MCF 10A (cell line): ENCODE measurements at regions of chr19 and their contacts with region 1.

Region 1: DNA sequence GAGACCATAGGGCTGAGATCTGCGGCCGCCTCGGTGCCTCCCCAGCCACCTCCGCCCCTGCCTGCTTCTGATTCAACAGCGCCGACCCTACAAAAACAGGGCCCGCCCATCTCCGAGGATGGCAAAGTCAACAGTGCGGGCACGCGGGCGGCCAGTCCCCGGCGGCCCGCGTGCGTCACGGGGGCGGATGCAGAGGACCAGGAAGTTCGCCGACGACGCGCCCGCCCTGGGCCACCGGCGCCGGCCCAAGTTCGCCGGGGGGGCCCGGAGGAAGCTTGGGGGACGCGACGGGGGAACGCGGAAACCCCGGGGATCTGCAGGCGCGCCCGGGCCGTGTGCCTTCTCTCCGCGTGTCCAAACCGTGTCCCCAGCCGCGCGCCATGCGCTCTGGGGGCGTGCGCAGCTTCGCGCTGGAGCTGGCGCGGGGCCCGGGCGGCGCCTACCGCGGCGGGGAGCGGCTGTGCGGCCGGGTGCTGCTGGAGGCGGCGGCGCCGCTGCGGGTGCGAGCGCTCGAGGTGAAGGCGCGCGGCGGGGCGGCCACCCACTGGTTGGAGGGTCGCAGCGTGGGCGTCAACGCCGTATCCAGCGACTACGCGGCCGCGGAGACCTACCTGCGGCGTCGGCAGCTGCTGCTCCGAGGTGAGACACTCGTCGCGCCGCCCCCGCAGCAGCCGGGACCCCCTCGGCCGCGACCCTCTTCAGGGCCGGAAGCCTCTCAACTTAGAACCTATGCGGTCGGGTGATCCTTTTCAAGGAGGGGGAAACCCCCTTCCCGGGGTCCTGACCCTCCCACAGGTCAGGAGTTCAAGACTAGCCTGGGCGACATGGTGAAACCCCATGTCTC is 6.8 kb upstream of the ARRDC2 start:
- DNase-seq: peak; percentile 88
- H3K4me3 Mint-ChIP-seq: peak overlapping the region; percentile 77
- H3K27ac Mint-ChIP-seq: peak overlapping the region; percentile 94
- H3K4me1 Mint-ChIP-seq: peaks cover 6% of the 10 kb centered on the region
- H3K27me3 Mint-ChIP-seq: no peaks in the 10 kb centered on the region
- CTCF ChIP-seq: no peak

Region 2: GRCh38 chr19:17873786-17874757 is 127.1 kb before region 1 on chr19:
- CTCF ChIA-PET with region 1: interaction called, 18 read pairs
- POLR2A ChIA-PET with region 1: no interaction called
- intact Hi-C with region 1: no loop called
- DNase-seq: peak; percentile 48
- H3K4me3 Mint-ChIP-seq: no peak overlapping the region
- H3K27ac Mint-ChIP-seq: no peak overlapping the region
- H3K4me1 Mint-ChIP-seq: no peaks in the 10 kb centered on the region
- H3K27me3 Mint-ChIP-seq: no peaks in the 10 kb centered on the region
- CTCF ChIP-seq: no peak

Region 3: DNA sequence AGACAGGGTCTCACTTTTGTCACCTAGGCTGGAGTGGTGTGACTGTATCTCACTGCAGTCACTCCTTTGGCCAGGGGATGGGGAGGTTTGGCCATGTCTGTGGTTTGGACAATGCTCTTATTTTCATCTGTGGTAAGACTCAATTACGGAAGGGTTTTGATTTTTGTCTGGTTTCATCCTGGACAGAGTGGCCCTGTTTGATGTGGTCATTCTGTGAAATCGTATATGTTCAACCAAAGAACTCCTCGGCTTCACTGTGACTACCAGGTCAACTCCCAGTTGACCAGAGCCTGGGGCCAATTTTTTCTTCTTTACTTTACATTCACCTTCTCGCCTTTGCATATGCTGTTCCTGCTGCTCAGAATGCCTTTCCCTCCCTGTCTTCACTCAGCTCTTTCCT is 75.1 kb before region 1 on chr19:
- CTCF ChIA-PET with region 1: no interaction called
- POLR2A ChIA-PET with region 1: no interaction called
- intact Hi-C with region 1: no loop called
- DNase-seq: no peak
- H3K4me3 Mint-ChIP-seq: no peak overlapping the region
- H3K27ac Mint-ChIP-seq: no peak overlapping the region
- H3K4me1 Mint-ChIP-seq: no peaks in the 10 kb centered on the region
- H3K27me3 Mint-ChIP-seq: no peaks in the 10 kb centered on the region
- CTCF ChIP-seq: no peak

Region 4: GRCh38 chr19:17947815-17948513 is 53.2 kb before region 1 on chr19:
- CTCF ChIA-PET with region 1: interaction called, 224 read pairs
- POLR2A ChIA-PET with region 1: interaction called, 4 read pairs
- intact Hi-C with region 1: no loop called
- DNase-seq: peak; percentile 94
- H3K4me3 Mint-ChIP-seq: peak overlapping the region; percentile 83
- H3K27ac Mint-ChIP-seq: peak overlapping the region; percentile 92
- H3K4me1 Mint-ChIP-seq: peaks cover 19% of the 10 kb centered on the region
- H3K27me3 Mint-ChIP-seq: peaks cover 40% of the 10 kb centered on the region
- CTCF ChIP-seq: no peak

Region 5: GRCh38 chr19:18021121-18021755 is 20.1 kb after region 1 on chr19:
- CTCF ChIA-PET with region 1: no interaction called
- POLR2A ChIA-PET with region 1: no interaction called
- intact Hi-C with region 1: no loop called
- DNase-seq: peak; percentile 93
- H3K4me3 Mint-ChIP-seq: peak overlapping the region; percentile 58
- H3K27ac Mint-ChIP-seq: peak overlapping the region; percentile 96
- H3K4me1 Mint-ChIP-seq: peaks cover 43% of the 10 kb centered on the region
- H3K27me3 Mint-ChIP-seq: no peaks in the 10 kb centered on the region
- CTCF ChIP-seq: no peak